Activated B cell treated with CpG ODN at 0.5 μM for 24 hours (primary cell): ENCODE measurements at regions of chr2 and their contacts with region 1.

Region 1: GRCh38 chr2:85318222-85319074 is 9.3 kb downstream of the TGOLN2 start:
- DNase-seq: no peak
- ATAC-seq: peak; percentile 21
- H3K4me3 Mint-ChIP-seq: no peak overlapping the region
- H3K27ac Mint-ChIP-seq: peak overlapping the region; percentile 53
- H3K4me1 Mint-ChIP-seq: peaks cover 49% of the 10 kb centered on the region
- H3K27me3 Mint-ChIP-seq: no peaks in the 10 kb centered on the region
- CTCF ChIP-seq: no peak

Region 2: GRCh38 chr2:85255813-85256594 is 62.4 kb before region 1 on chr2:
- CTCF ChIA-PET with region 1: no interaction called
- POLR2A ChIA-PET with region 1: no interaction called
- intact Hi-C with region 1: no loop called
- DNase-seq: no peak
- ATAC-seq: no peak
- H3K4me3 Mint-ChIP-seq: no peak overlapping the region
- H3K27ac Mint-ChIP-seq: no peak overlapping the region
- H3K4me1 Mint-ChIP-seq: no peaks in the 10 kb centered on the region
- H3K27me3 Mint-ChIP-seq: peaks cover 11% of the 10 kb centered on the region
- CTCF ChIP-seq: no peak

Region 3: DNA sequence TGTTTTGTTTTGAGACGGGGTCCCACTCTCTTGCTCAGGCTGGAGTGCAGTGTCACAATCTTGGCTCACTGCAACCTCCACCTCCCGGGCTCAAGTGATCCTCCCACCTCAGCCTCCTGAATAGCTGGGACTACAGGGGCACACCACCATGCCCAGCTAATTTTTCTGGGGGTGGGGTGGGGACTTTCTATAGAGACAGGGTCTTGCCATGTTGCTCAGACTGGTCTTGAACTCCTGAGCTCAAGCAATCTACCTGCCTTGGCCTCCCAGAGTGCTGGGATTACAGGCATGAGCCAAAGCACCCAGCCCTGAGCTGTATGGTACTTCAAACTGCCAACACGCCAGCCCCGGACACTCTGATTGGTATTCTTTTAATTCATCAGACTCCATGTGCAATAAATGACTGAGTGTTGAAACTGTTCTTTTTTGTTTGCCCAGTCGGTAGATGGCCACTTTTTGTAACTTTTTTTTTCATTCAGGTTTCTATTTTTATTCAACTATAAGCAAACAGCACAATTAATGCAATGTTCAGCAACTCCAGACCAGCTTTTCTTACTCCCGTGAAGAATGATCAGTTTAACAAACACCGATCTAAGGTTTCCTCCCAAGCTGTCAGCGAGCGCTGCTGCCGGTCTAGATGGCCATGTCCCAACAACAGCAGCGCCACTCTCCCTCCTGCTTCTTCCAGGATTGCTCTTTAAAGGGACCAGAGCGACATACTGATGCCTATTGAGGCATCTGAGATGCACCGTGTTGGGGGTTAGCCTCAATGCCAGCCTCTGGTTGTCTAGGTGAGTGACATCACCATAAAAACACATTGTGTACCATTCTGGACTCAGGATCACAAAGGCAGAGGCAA is 21.8 kb after region 1 on chr2:
- CTCF ChIA-PET with region 1: no interaction called
- POLR2A ChIA-PET with region 1: no interaction called
- intact Hi-C with region 1: loop called (anchors 1 kb)
- DNase-seq: no peak
- ATAC-seq: no peak
- H3K4me3 Mint-ChIP-seq: no peak overlapping the region
- H3K27ac Mint-ChIP-seq: no peak overlapping the region
- H3K4me1 Mint-ChIP-seq: no peaks in the 10 kb centered on the region
- H3K27me3 Mint-ChIP-seq: no peaks in the 10 kb centered on the region
- CTCF ChIP-seq: no peak

Region 4: DNA sequence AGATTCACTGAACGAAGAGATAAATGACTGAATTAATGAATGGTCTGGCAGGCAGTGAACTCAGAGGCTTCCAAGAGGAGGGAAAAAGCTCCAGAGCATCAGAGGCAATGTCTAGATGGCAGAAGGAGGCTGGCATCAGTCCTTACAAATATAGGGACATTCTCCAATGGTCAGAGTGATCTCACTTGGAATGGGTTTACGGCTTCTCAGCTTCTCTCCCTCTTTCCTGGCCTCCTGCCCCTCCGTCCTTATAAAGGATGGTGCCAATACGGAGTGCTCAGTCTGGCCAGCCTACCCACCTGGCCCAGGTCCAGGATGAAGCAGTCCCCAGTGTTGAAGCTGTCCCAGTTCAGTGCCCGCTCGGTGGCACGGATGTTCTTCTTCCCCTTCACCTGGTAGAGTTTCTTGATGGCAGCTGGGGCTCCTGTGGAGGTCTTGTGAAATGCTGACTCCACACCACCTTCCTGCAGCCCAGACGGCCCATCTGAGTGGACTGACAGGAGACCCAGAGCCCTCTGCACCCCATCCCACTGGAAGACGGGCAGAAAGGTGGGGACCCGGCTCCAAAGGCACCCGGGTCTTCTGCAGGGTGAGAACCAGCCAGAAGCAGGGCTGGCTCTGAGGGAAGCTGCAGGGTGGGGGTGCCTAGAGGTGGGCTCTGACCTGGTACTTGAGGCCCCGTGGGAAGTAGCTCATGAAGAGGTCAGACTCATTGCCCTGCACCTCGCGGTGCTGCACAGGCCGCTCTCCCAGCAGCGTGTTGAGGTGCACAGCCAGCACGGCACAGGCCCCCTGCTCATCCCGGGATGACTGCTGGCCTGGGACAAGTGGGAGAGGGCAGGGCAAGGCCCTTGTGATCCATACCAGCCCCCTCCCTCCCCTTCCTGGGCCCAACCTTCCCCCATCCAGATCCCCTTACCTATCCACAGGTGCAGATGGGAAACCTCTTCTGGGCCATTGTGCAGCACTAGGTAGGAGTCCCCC is 82.7 kb after region 1 on chr2:
- CTCF ChIA-PET with region 1: no interaction called
- POLR2A ChIA-PET with region 1: no interaction called
- intact Hi-C with region 1: no loop called
- DNase-seq: no peak
- ATAC-seq: no peak
- H3K4me3 Mint-ChIP-seq: no peak overlapping the region
- H3K27ac Mint-ChIP-seq: no peak overlapping the region
- H3K4me1 Mint-ChIP-seq: peaks cover 34% of the 10 kb centered on the region
- H3K27me3 Mint-ChIP-seq: no peaks in the 10 kb centered on the region
- CTCF ChIP-seq: no peak